Caco-2 (cell line): ENCODE measurements at regions of chr12 and their contacts with region 1.

Region 1: DNA sequence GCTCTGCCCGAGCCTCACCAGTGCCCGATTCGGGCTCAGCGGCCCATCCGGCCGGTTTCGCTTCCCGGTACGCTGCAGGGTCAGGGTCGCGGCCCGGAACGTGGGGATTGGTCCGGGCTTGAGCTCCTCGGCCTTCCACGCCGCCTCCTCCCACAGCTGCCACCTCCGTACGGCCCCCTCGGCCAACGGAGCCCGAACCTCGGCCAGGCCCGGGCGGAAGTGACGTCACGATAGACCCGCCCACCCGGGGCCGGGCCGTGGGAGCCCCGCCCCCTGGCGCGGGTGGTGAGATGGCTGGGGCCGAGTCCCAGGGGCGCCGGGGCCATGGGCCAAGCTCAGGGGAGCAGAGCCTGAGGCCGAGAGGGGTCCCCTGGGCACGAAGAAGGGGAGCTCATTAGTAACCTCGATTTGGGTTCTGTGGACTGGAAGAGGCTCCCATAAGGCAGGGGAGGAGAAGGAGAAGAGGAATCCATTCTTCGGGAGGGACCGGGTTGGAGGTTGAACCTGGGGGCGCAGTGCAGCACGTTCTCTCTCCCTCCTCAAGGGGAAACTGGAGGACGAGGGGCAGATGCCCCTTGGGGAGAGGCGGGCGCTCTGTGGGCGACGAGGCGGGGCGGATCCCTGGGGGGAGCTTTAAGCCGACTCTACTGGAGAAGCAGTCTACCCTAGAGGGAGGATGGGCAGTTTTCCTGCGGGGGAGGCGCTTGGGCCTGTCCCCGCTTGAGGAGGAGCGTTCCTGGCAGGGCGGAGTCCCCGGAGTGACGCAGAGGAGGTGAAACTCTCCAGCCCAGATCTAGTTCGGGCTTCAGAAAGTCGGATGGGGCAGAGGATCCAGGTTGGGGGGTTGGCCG is at the start of gene MLF2:
- DNase-seq: peak; percentile 99 to 100
- H3K4me3 ChIP-seq: peak within 1 kb of the TSS; percentile 97
- H3K4me3 Mint-ChIP-seq: peak within 1 kb of the TSS; percentile 90
- H3K27ac Mint-ChIP-seq: peak within 1 kb of the TSS; percentile 94
- H3K4me1 ChIP-seq: peaks cover 16% of the 10 kb centered on the region
- H3K4me1 Mint-ChIP-seq: peaks cover 11% of the 10 kb centered on the region
- H3K27me3 ChIP-seq: no peaks in the 10 kb centered on the region
- H3K27me3 Mint-ChIP-seq: no peaks in the 10 kb centered on the region
- CTCF ChIP-seq: peak; percentile 99
- total RNA-seq, gene MLF2: 303 and 309 TPM in 2 replicates

Region 2: GRCh38 chr12:6735448-6736191 is 17.5 kb before region 1 on chr12:
- CTCF ChIA-PET with region 1: interaction called, 9 read pairs
- POLR2A ChIA-PET with region 1: interaction called, 5 read pairs
- intact Hi-C with region 1: loop called (anchors 1 kb)
- DNase-seq: peak; percentile 70 to 81
- H3K4me3 ChIP-seq: no peak overlapping the region
- H3K4me3 Mint-ChIP-seq: no peak overlapping the region
- H3K27ac Mint-ChIP-seq: peak overlapping the region; percentile 24
- H3K4me1 ChIP-seq: no peaks in the 10 kb centered on the region
- H3K4me1 Mint-ChIP-seq: peaks cover 8% of the 10 kb centered on the region
- H3K27me3 ChIP-seq: no peaks in the 10 kb centered on the region
- H3K27me3 Mint-ChIP-seq: no peaks in the 10 kb centered on the region
- CTCF ChIP-seq: peak; percentile 94

Region 3: DNA sequence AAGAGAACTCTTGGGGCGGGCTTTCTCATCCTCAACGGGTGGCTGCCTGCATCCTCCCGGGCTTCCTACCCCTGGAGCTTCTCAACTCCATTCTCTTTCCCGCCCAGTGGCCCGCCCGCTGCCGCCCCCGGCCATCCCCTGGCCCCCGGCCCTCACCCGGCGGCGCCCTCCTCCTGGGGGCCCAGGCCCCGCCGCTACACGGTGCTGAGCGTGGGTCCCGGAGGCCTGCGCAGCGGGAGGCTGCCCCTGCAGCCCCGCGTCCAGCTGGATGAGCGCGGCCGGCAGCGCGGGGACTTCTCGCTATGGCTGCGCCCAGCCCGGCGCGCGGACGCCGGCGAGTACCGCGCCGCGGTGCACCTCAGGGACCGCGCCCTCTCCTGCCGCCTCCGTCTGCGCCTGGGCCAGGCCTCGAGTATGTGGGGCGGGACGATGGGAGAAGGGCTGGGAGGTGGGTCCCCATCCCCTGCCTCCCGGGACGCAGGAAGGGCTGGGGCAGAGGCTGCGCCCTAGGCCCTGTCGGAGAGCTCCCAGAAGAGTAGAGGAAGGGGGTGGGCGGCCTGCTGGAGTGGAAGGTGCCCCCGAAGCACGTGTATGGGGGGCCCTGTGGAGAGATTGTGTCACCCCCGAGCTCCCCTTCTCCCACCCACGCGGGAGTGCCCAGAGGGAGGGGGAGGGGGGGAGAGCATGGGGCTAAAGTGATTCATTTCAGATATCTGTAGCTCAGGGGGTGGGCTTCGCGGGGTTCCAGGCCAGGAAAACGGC is 20.6 kb after region 1 on chr12:
- CTCF ChIA-PET with region 1: interaction called, 51 read pairs
- POLR2A ChIA-PET with region 1: interaction called, 20 read pairs
- intact Hi-C with region 1: no loop called
- DNase-seq: no peak
- H3K4me3 ChIP-seq: no peak overlapping the region
- H3K4me3 Mint-ChIP-seq: no peak overlapping the region
- H3K27ac Mint-ChIP-seq: no peak overlapping the region
- H3K4me1 ChIP-seq: peaks cover 27% of the 10 kb centered on the region
- H3K4me1 Mint-ChIP-seq: peaks cover 49% of the 10 kb centered on the region
- H3K27me3 ChIP-seq: no peaks in the 10 kb centered on the region
- H3K27me3 Mint-ChIP-seq: no peaks in the 10 kb centered on the region
- CTCF ChIP-seq: no peak

Region 4: DNA sequence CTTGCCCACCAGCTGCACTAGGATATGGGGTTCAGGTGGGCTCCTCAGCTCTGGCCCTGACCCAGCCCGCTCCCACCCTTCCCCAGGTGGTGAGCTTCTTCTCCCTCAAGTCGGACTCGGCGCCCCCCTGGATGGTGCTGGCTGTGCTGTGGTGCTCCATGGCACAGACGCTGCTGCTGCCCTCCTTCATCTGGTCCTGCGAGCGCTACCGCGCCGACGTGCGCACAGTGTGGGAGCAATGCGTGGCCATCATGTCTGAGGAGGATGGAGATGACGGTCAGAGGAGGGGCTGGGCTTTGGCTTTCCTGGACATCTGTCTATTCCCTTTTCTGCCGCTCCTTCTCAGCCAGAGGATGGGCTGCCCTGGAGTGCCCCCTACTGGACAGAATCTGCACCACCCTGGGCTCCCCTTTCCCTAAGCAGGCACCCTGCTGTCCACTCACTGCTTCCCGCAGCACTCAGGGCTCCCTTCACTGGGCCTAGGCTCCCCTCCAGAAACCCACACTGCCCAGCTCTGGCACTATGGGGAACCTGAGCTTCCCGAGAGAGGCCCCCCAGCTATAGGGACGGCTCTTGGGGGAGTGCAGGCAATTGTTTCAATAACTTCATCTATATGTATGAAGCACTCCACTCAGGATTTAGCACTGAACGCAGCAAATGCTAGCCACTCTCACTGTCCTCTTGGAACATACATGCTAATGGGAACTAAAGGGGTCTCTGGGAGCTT is 72.4 kb after region 1 on chr12:
- CTCF ChIA-PET with region 1: interaction called, 16 read pairs
- POLR2A ChIA-PET with region 1: interaction called, 5 read pairs
- intact Hi-C with region 1: loop called (anchors 1 kb)
- DNase-seq: peak; percentile 87 to 93
- H3K4me3 ChIP-seq: no peak overlapping the region
- H3K4me3 Mint-ChIP-seq: no peak overlapping the region
- H3K27ac Mint-ChIP-seq: no peak overlapping the region
- H3K4me1 ChIP-seq: peaks cover 23% of the 10 kb centered on the region
- H3K4me1 Mint-ChIP-seq: peaks cover 14% of the 10 kb centered on the region
- H3K27me3 ChIP-seq: no peaks in the 10 kb centered on the region; the same call in 1 of the 2 replicates
- H3K27me3 Mint-ChIP-seq: peaks cover 26% of the 10 kb centered on the region
- CTCF ChIP-seq: peak; percentile 97 to 98

Region 5: GRCh38 chr12:6851921-6852650 is 98.9 kb after region 1 on chr12 and contains the start of gene USP5:
- CTCF ChIA-PET with region 1: interaction called, 28 read pairs
- POLR2A ChIA-PET with region 1: interaction called, 25 read pairs
- intact Hi-C with region 1: loop called (anchors 1 kb)
- DNase-seq: peak; percentile 100
- H3K4me3 ChIP-seq: peak within 1 kb of the TSS; percentile 69
- H3K4me3 Mint-ChIP-seq: peak within 1 kb of the TSS; percentile 94
- H3K27ac Mint-ChIP-seq: peak within 1 kb of the TSS; percentile 95
- H3K4me1 ChIP-seq: peaks cover 13% of the 10 kb centered on the region
- H3K4me1 Mint-ChIP-seq: peaks cover 19% of the 10 kb centered on the region
- H3K27me3 ChIP-seq: no peaks in the 10 kb centered on the region
- H3K27me3 Mint-ChIP-seq: no peaks in the 10 kb centered on the region
- CTCF ChIP-seq: no peak
- total RNA-seq, gene USP5: 226 and 230 TPM in 2 replicates

Region 6: GRCh38 chr12:7042842-7043241 is 289.7 kb after region 1 on chr12:
- CTCF ChIA-PET with region 1: no interaction called
- POLR2A ChIA-PET with region 1: no interaction called
- intact Hi-C with region 1: no loop called
- DNase-seq: peak in 1 of 2 experiments; percentile 62
- H3K4me3 ChIP-seq: no peak overlapping the region
- H3K4me3 Mint-ChIP-seq: no peak overlapping the region
- H3K27ac Mint-ChIP-seq: no peak overlapping the region
- H3K4me1 ChIP-seq: no peaks in the 10 kb centered on the region
- H3K4me1 Mint-ChIP-seq: peaks cover 7% of the 10 kb centered on the region
- H3K27me3 ChIP-seq: no peaks in the 10 kb centered on the region
- H3K27me3 Mint-ChIP-seq: no peaks in the 10 kb centered on the region
- CTCF ChIP-seq: peak; percentile 49 to 63

Region 7: DNA sequence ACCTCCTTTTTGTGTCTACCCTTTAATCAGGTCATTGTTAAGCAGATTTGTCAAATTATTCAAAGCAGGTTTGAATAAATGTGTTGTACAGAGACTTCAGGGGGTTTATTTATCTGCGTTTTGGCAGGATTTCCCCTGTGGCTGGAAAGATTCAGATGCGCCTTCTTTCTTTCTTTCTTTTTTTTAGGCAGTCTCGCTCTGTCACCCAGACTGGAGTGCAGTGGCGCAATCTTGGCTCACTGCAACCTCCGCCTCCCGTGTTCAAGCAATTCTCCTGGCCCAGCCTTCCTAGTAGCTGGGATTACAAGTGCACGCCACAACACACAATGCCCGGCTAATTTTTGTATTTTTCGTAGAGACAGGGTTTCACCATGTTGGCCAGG is 1005.6 kb after region 1 on chr12:
- CTCF ChIA-PET with region 1: no interaction called
- POLR2A ChIA-PET with region 1: interaction called, 10 read pairs
- intact Hi-C with region 1: no loop called
- DNase-seq: no peak
- H3K4me3 ChIP-seq: no peak overlapping the region
- H3K4me3 Mint-ChIP-seq: no peak overlapping the region
- H3K27ac Mint-ChIP-seq: no peak overlapping the region
- H3K4me1 ChIP-seq: 0 out of 2 replicates have a peak, but pooled peaks cover 7% of the 10 kb centered on the region
- H3K4me1 Mint-ChIP-seq: peaks cover 6% of the 10 kb centered on the region
- H3K27me3 ChIP-seq: no peaks in the 10 kb centered on the region
- H3K27me3 Mint-ChIP-seq: no peaks in the 10 kb centered on the region
- CTCF ChIP-seq: no peak